ENCODE measurements at regions of chr9 and their contacts with region 1.

Region 1: DNA sequence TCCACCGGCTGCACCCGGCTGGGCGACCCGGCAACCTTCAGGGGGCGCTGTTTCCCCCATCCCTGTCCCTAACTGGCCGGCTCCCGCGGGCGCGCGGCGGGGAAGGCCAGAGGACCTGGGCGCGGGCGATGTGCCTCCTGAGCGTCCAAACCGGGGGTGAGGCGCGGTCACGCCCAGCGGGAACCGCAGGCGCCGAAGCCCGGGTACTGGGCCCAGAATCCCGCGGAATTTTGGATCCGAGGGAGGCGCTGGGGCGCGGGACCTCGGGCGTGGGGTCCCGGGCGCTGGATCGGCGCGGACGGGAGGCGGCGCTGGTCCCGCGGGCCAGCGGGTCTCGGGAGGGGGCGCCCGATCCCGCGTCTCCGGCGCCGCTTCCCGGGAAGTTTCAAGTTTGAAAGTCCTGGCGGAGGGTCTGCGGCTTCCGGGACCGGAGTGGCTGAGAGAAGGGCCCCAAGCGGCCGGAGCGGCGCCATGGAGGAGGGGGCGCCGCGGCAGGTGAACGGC is at the start of gene PKN3:
- DNase-seq: peak; percentile 98
- H3K4me3 ChIP-seq: peak within 1 kb of the TSS; percentile 68 to 85
- H3K27ac ChIP-seq: peak within 1 kb of the TSS in 1 of 2 experiments; percentile 38; a peak in 2 of 4 replicates
- H3K4me1 ChIP-seq: peaks cover 0 to 4% of the 10 kb centered on the region in 2 experiments; a peak in 1 of 4 replicates
- H3K27me3 ChIP-seq: no peaks in the 10 kb centered on the region
- CTCF ChIP-seq: peak; percentile 96
- EP300 ChIP-seq: no peak
- RAD21 ChIP-seq: peak; percentile 35
- polyA plus RNA-seq, gene PKN3: 5.0 and 7.8 TPM in 2 replicates

Region 2: DNA sequence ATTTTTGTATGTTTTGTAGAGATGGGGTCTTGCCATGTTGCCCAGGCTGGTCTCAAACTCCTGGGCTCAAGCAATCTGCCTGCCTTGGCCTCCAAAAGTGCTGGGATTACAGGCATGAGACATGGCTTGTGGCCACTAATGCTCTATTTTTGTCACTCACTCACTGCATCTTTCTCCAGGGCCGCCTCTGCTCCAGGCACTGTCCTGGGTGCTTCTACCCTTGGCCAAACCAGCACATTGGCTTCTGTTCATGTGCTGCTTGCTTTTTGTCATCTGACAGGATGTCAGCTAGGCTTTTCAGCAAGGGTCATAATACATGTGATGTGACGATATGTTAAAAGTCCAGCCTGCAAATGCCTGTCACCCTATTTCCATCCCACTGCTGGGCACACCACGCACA is 243.5 kb before region 1 on chr9:
- CTCF ChIA-PET with region 1: no interaction called
- POLR2A ChIA-PET with region 1: no interaction called
- DNase-seq: no peak
- H3K4me3 ChIP-seq: no peak overlapping the region
- H3K27ac ChIP-seq: no peak overlapping the region
- H3K4me1 ChIP-seq: peaks cover 3 to 9% of the 10 kb centered on the region in 2 experiments; a peak in 1 of 4 replicates
- H3K27me3 ChIP-seq: no peaks in the 10 kb centered on the region
- CTCF ChIP-seq: no peak
- EP300 ChIP-seq: no peak
- RAD21 ChIP-seq: no peak

Region 3: DNA sequence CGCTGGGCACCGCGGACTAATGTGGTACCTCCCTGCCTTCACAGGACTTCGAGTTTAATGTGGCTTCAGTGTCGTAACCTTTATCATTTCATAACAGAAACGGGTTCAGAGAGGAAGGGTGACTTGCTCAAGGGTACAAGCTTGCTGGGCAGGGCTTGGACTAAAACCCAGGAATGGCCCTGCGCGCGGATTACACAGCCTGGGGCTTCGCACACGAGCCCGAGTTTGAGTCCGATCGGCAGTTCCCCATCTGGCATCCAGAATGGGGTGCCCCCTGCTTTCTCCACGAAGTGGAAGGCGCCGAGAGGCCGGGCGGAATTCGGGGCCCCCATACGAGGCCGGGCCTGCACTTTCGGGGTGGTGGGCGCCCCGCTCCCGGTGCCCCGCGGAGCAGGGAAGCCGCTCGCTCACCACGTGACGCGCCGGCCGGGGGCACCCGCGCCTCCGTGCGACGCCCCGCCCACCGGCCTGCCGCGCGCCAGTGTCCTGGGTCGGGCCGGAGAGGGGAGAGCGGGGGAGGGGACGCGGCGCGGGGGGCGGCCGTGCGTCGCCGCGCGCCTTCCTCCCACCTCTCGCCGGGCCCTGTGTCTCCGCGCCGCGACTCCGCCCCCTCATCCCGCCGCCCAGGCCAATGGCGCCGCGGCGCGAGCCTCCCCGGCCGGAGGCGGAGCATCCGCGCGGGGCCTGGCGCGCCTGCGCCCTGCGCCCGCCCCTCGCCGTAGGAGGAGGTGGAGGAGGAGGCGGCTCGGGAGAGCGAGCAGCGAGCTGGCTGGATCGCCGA is 13.8 kb before region 1 on chr9 and contains the start of gene SET:
- CTCF ChIA-PET with region 1: interaction called, 64 read pairs
- POLR2A ChIA-PET with region 1: interaction called, 3 read pairs
- DNase-seq: peak; percentile 100
- H3K4me3 ChIP-seq: peak within 1 kb of the TSS; percentile 76 to 97
- H3K27ac ChIP-seq: peak within 1 kb of the TSS; percentile 69 to 93
- H3K4me1 ChIP-seq: peaks cover 3 to 6% of the 10 kb centered on the region in 2 experiments; a peak in 2 of 4 replicates
- H3K27me3 ChIP-seq: no peaks in the 10 kb centered on the region
- CTCF ChIP-seq: no peak
- EP300 ChIP-seq: no peak
- RAD21 ChIP-seq: no peak
- polyA plus RNA-seq, gene SET: 64.6 and 79.5 TPM in 2 replicates

Region 4: DNA sequence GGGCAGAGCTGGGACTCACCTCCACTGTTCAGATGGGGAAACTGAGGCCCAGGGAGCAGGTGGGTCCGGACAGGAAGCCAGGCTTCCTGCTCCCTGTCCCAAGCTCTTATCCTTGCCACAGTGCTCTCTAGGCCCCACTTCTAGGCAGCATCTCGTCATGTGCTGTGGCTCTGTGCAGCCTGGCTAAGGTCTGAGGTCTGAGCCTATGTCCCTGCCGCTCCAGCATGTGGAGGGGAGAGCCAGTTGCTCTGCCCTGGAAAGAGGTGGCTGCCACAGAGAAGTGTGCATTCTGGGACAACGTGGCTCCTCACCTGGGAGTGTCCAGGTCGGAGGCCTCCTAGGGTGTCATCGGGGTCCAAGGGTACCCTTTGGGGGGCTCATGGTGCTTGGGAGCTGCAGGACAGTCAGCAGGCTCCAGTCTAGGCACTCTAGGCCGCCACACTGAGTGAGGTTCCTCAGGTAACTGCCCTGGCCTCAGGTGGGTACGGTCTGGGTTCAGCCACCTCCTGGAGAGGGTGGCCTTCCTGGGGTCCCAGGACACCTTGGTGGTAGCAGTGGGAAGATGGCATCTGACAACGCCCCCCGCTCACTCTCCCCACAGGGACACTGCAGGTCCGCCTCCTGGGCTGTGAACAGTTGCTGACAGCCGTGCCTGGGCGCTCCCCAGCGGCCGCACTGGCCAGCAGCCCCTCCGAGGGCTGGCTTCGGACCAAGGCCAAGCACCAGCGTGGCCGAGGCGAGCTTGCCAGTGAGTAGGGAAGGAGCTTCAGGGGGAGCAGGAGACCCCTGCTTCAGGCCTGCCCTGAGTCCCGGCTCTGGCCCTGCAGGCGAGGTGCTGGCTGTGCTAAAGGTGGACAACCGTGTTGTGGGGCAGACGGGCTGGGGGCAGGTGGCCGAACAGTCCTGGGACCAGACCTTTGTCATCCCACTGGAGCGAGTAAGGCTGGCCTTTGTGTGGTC is 10.2 kb after region 1 on chr9:
- CTCF ChIA-PET with region 1: interaction called, 16 read pairs
- POLR2A ChIA-PET with region 1: no interaction called
- DNase-seq: peak; percentile 17
- H3K4me3 ChIP-seq: no peak overlapping the region
- H3K27ac ChIP-seq: no peak overlapping the region
- H3K4me1 ChIP-seq: peaks cover 0 to 3% of the 10 kb centered on the region in 2 experiments; a peak in 1 of 4 replicates
- H3K27me3 ChIP-seq: no peaks in the 10 kb centered on the region
- CTCF ChIP-seq: no peak
- EP300 ChIP-seq: no peak
- RAD21 ChIP-seq: no peak

Region 5: DNA sequence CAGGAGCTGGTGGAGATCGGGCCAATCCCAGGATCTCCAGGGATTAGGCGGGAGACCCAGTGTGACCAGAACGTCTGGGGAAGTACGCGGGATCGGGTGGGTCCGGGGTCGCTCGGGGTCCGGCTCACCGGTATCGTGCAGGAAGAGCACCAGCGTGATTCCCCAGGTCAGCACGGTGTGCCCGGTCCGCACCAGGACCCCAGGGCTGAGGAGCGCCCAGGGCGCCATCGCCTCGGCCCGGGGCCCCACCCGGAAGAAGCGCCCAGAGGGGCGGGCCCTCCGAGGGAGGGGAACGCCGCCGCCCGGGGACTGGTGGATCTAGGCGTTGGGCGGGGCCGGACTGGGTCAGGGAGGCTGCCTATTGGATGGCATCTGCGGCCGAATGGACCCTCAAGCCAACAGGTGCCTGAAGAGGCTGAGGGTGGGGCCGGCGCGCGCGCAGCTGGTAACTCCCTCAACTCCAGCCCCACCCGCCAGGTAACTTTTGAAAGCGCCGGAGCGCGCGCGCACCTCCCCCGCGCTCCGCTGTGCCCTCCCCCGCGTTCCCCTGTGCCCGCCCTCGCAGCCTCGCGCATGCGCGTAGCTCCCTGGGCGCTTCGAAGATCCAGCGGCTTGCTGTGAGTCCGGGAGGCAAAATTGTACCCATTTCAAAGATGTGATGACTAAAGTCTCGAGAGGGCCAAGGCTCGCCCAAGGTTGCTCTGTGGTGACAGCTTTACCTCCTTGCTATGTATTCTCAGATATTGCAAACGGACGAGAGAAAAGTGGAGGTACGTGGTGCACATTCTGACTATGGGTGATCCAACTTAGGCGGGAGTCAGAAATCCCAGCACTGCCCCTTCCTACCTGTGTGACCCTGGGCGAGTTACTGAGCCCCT is 21.6 kb after region 1 on chr9 and contains the start of gene ZDHHC12:
- CTCF ChIA-PET with region 1: interaction called, 12 read pairs
- POLR2A ChIA-PET with region 1: interaction called, 4 read pairs
- DNase-seq: peak; percentile 99
- H3K4me3 ChIP-seq: peak within 1 kb of the TSS; percentile 70 to 75
- H3K27ac ChIP-seq: peak within 1 kb of the TSS; percentile 25 to 69; a peak in 3 of 4 replicates
- H3K4me1 ChIP-seq: peaks cover 0 to 22% of the 10 kb centered on the region in 2 experiments; a peak in 1 of 4 replicates
- H3K27me3 ChIP-seq: no peaks in the 10 kb centered on the region
- CTCF ChIP-seq: no peak
- EP300 ChIP-seq: no peak
- RAD21 ChIP-seq: no peak
- polyA plus RNA-seq, gene ZDHHC12: 36.6 and 51.3 TPM in 2 replicates

Region 6: DNA sequence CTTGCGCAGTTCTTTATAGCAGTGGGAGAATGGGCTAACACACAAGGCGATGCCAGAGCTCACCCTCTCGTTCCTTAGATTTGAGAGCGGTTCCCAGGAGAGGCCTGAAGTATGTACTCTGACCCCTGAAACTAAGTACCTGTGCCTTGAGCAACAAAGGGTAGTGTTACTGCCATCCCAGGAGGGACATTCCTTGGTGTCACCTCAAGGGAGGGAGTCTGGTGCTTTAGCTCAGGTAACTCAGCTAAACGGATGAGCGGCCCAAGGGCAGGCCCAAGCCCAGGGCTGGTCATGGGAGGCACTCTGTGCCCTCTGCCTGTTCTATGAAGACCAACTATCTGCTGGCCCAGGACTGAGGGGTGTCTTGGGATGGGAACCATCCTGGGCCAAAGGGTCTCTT is 159.0 kb after region 1 on chr9:
- CTCF ChIA-PET with region 1: no interaction called
- POLR2A ChIA-PET with region 1: no interaction called
- DNase-seq: no peak
- H3K4me3 ChIP-seq: no peak overlapping the region
- H3K27ac ChIP-seq: no peak overlapping the region
- H3K4me1 ChIP-seq: no peaks in the 10 kb centered on the region; a peak in 1 of 4 replicates
- H3K27me3 ChIP-seq: no peaks in the 10 kb centered on the region
- CTCF ChIP-seq: no peak
- EP300 ChIP-seq: no peak
- RAD21 ChIP-seq: no peak